Common myeloid progenitor, CD34-positive (primary cell): ENCODE measurements at regions of chr22 and their contacts with region 1.

Region 1: GRCh38 chr22:38724926-38725571 is 19.3 kb downstream of the GTPBP1 start:
- DNase-seq: peak; percentile 52 to 78 (median 71)
- H3K4me3 ChIP-seq: no peak overlapping the region
- H3K27ac ChIP-seq: no peak overlapping the region
- H3K4me1 ChIP-seq: no peaks in the 10 kb centered on the region
- H3K27me3 ChIP-seq: no peaks in the 10 kb centered on the region

Region 2: DNA sequence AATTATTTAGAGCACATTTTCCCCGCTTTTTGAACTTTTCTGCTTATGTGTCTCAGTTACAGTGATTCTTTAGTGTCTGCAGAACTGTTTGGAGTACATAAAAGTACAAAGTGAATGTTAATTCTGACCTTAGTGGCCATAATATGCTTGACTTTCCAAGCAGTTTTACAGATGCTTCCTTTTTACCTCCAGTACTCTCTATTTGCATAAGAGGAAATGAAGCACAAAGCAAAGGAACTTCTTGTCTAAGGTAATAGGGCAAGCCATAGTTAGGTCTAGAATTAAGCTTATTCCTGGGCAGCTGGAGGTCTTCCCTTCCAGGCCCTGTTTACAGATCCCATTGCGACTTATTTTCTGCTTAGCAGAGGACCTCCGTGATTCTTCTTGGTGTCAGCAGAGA is 15.7 kb before region 1 on chr22:
- CTCF ChIA-PET with region 1: interaction called, 29 read pairs
- POLR2A ChIA-PET with region 1: interaction called, 4 read pairs
- DNase-seq: peak in 1 of 3 donors; percentile 18
- H3K4me3 ChIP-seq: peak overlapping the region in 1 of 7 experiments; percentile 15
- H3K27ac ChIP-seq: no peak overlapping the region
- H3K4me1 ChIP-seq: peaks cover 27 to 57% (median 43%) of the 10 kb centered on the region in 4 experiments
- H3K27me3 ChIP-seq: no peaks in the 10 kb centered on the region